ENCODE measurements at regions of chr9 and their contacts with region 1.

Region 1: GRCh38 chr9:132944302-132945185 is at the start of gene TSC1:
- DNase-seq: peak; percentile 97
- H3K4me3 Mint-ChIP-seq: peak within 1 kb of the TSS; percentile 97
- H3K27ac Mint-ChIP-seq: peak within 1 kb of the TSS; percentile 99
- H3K4me1 Mint-ChIP-seq: peaks cover 27% of the 10 kb centered on the region
- H3K27me3 Mint-ChIP-seq: no peaks in the 10 kb centered on the region
- total RNA-seq, gene TSC1: 18.8 to 19.7 TPM

Region 2: DNA sequence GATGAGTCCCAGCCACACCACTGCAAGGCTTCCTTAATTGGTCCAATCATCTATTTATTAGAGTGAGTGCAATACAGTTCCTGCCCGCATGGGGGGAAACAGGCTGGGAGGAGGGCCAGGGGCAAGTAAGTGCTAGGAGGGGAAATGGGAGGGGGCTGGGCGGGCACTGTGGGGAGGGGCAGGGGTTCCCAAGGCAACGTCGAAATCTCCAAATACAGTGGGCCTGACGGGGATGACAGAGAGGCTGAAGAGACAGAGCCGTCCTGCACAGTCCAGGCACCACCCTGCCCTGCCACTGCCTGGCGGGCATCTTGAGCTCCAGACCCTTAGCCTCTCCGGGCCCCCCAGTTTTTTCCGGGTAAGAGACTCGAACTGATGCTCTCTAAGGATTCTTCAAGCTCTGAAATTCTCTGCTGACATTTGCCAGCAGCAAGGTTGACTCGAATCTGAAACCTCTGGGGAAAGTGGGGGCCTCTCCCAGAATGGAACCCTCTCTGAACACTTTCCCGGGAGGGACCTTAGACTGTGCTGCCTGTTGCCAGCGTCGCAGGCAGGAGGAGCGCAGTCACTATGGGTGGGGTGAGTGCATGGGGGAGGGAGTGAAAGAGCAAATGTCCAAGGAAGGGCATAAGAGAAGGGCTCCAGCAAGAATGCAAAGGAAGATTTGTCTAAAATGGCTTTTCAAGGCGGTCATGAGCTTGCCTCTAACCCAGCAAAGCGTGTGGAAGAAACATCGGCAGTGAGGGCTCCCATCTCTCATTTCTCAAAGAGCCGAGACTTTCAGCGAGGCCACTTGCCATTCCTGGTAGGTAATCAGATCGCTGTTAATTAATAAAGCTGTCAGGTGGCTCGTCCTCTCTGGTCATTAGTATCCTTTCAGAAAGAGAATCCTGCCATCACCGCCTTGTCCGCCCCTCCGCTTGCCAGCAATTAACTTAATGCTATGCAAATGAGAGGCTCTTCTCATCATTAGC is 175.3 kb before region 1 on chr9:
- CTCF ChIA-PET with region 1: no interaction called
- intact Hi-C with region 1: loop called (anchors 2 kb)
- DNase-seq: peak; percentile 80
- H3K4me3 Mint-ChIP-seq: peak overlapping the region; percentile 88
- H3K27ac Mint-ChIP-seq: peak overlapping the region; percentile 89
- H3K4me1 Mint-ChIP-seq: peaks cover 13% of the 10 kb centered on the region
- H3K27me3 Mint-ChIP-seq: no peaks in the 10 kb centered on the region

Region 3: GRCh38 chr9:132877824-132878694 is 66.5 kb before region 1 on chr9 and contains the start of gene AK8:
- CTCF ChIA-PET with region 1: no interaction called
- intact Hi-C with region 1: loop called (anchors 1 kb)
- DNase-seq: peak; percentile 71
- H3K4me3 Mint-ChIP-seq: peak within 1 kb of the TSS; percentile 74
- H3K27ac Mint-ChIP-seq: no peak within 1 kb of the TSS
- H3K4me1 Mint-ChIP-seq: peaks cover 8% of the 10 kb centered on the region
- H3K27me3 Mint-ChIP-seq: no peaks in the 10 kb centered on the region
- total RNA-seq, gene AK8: not detected

Region 4: DNA sequence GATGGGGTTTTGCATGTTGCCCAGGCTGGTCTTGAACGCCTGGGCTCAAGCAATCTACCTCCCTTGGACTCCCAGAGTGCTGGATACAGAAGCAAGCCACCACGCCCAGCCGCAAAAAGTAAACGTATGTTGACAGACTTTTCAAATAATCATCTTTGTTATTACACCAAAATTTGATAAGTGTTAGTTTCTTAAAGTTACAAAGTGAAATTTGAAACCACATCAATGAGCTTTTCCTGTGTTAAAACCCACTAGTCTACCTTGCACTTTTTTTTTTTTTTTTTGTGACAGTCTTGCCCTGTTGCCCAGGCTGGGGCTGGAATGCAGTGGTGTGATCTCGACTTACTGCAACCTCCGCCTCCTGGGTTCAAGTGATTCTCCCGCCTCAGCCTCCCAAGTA is 35.9 kb before region 1 on chr9:
- CTCF ChIA-PET with region 1: no interaction called
- intact Hi-C with region 1: no loop called
- DNase-seq: no peak
- H3K4me3 Mint-ChIP-seq: no peak overlapping the region
- H3K27ac Mint-ChIP-seq: no peak overlapping the region
- H3K4me1 Mint-ChIP-seq: peaks cover 12% of the 10 kb centered on the region
- H3K27me3 Mint-ChIP-seq: no peaks in the 10 kb centered on the region